Posterior vena cava (tissue), 2 donors: ENCODE measurements at regions of chr3 and their contacts with region 1.

Region 1: GRCh38 chr3:8739757-8740491 is 6.3 kb downstream of the CAV3 start:
- DNase-seq: peak; percentile 42

Region 2: DNA sequence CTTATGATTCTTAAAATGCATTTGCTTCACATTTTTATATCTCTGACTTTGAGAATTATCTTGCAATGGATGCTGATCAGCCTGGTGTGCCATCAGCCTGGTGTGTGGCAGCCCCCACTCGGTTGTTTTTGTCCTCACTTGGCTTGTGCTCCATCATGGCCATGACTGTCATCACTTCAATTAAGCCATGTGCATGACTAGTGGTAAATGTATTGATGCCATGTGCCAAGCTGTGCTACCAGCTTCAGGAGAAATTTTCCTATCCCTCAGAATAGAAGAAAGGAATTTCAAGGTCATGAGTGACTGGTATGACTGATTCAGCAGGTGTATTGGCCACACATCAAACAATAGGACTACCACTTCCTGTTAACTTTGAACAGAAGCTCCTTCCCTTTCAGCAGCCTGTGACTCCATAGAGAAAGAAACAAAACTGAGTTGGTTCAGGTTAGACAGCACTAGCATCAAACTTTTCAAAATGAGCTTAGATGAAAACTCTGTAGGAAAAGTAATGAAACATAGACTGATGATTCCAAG is 1627.3 kb before region 1 on chr3:
- intact Hi-C with region 1: loop called in 1 of 2 experiments (anchors 5 kb)
- DNase-seq: no peak

Region 3: GRCh38 chr3:8201886-8202285 is 538.0 kb before region 1 on chr3:
- intact Hi-C with region 1: no loop called
- DNase-seq: no peak

Region 4: GRCh38 chr3:8702560-8702959 is 37.4 kb before region 1 on chr3:
- intact Hi-C with region 1: loop called in 1 of 2 experiments (anchors 5 kb)
- DNase-seq: no peak

Region 5: GRCh38 chr3:8776406-8776805 is 36.5 kb after region 1 on chr3:
- intact Hi-C with region 1: no loop called
- DNase-seq: no peak